Activated CD8-positive, alpha-beta memory T cell treated with anti-CD3 and anti-CD28 coated beads, Interleukin-2, amount 10 ng/mL, durations not matched to agents 7 days and 5 days (primary cell): ENCODE measurements at regions of chr1 and their contacts with region 1.

Region 1: GRCh38 chr1:185681034-185681633 is 53.1 kb upstream of the HMCN1 start:
- DNase-seq: no peak
- ATAC-seq: peak; percentile 69
- H3K4me3 Mint-ChIP-seq: peak overlapping the region; percentile 7
- H3K27ac Mint-ChIP-seq: no peak overlapping the region
- H3K4me1 Mint-ChIP-seq: peaks cover 23% of the 10 kb centered on the region
- H3K27me3 Mint-ChIP-seq: peaks cover 3% of the 10 kb centered on the region

Region 2: DNA sequence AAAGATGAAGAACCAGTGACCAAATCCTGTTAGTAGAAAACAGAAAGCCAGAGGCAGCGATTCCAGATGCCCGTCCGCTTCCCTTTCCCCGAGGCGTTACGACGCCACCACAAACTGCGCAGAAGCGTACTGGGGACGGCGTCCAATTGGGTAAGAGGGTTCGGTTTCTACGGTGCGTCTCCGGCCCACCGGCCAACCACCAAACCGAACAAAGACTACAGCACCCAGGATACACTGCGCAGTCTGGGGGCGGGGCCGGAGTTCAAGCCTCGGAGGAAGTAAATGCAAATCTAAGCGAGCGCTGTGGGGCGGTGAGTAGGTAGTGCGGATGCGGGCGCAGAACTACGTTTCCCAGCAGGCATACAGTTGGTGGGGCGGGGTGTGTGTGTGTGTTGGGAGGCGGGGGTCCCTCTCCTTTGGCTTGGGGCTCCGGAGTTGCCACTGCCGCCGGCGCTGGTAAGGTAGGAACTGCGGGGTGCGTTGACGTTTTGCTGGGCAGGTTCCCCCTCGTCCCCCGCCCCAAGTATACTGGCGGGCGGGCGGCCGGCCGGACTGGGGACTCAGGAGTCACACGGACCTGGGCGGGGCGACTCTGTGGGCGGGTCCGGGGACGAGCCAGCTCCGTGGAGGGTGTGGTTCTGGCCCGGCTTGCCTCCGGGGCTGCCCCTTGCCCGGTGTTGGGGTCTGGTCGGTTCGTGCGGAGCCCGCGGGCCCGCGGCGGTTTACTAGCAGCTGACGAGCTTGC is 524.1 kb before region 1 on chr1 and contains the starts of genes SWT1 and TRMT1L:
- CTCF ChIA-PET with region 1: interaction called, 12 read pairs
- DNase-seq: peak; percentile 99
- ATAC-seq: peak; percentile 93
- H3K4me3 Mint-ChIP-seq: peak within 1 kb of the TSS; percentile 86
- H3K27ac Mint-ChIP-seq: peak within 1 kb of the TSS; percentile 97
- H3K4me1 Mint-ChIP-seq: peaks cover 51% of the 10 kb centered on the region
- H3K27me3 Mint-ChIP-seq: no peaks in the 10 kb centered on the region
- total RNA-seq, gene SWT1: 2.2 to 2.4 TPM
- total RNA-seq, gene TRMT1L: 23.2 to 24.4 TPM

Region 3: DNA sequence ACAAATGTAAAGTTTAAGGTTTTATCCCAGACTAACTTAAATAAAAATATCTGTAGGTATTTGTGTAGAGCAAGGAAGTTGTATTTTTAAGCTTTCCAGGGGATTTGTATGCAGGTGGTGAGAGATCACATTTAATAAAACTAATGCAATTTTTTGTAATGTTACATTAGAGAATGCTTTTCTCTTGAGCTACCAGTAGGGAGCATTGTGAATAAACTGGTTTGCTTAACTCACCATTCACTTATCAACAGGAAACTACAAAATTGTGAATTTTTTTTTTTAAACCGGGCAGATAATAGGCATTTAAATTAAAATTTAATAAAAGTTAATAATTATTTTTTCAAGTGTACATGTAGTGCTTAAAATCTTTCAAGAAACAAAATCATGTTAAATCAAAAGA is 442.7 kb before region 1 on chr1:
- CTCF ChIA-PET with region 1: interaction called, 12 read pairs
- DNase-seq: no peak
- ATAC-seq: no peak
- H3K4me3 Mint-ChIP-seq: no peak overlapping the region
- H3K27ac Mint-ChIP-seq: no peak overlapping the region
- H3K4me1 Mint-ChIP-seq: peaks cover 10% of the 10 kb centered on the region
- H3K27me3 Mint-ChIP-seq: no peaks in the 10 kb centered on the region

Region 4: GRCh38 chr1:185566995-185567394 is 114.1 kb before region 1 on chr1:
- CTCF ChIA-PET with region 1: interaction called, 10 read pairs
- DNase-seq: peak; percentile 79
- ATAC-seq: peak; percentile 78
- H3K4me3 Mint-ChIP-seq: peak overlapping the region; percentile 39
- H3K27ac Mint-ChIP-seq: peak overlapping the region; percentile 88
- H3K4me1 Mint-ChIP-seq: peaks cover 51% of the 10 kb centered on the region
- H3K27me3 Mint-ChIP-seq: no peaks in the 10 kb centered on the region

Region 5: GRCh38 chr1:185670187-185670627 is 10.9 kb before region 1 on chr1:
- CTCF ChIA-PET with region 1: interaction called, 23 read pairs
- DNase-seq: peak; percentile 77
- ATAC-seq: peak; percentile 89
- H3K4me3 Mint-ChIP-seq: no peak overlapping the region
- H3K27ac Mint-ChIP-seq: no peak overlapping the region
- H3K4me1 Mint-ChIP-seq: peaks cover 45% of the 10 kb centered on the region
- H3K27me3 Mint-ChIP-seq: no peaks in the 10 kb centered on the region

Region 6: GRCh38 chr1:185864889-185865288 is 183.8 kb after region 1 on chr1:
- CTCF ChIA-PET with region 1: no interaction called
- DNase-seq: no peak
- ATAC-seq: no peak
- H3K4me3 Mint-ChIP-seq: no peak overlapping the region
- H3K27ac Mint-ChIP-seq: no peak overlapping the region
- H3K4me1 Mint-ChIP-seq: no peaks in the 10 kb centered on the region
- H3K27me3 Mint-ChIP-seq: no peaks in the 10 kb centered on the region